Thyroid gland (tissue), 4 donors: ENCODE measurements at regions of chr22 and their contacts with region 1.

Region 1: DNA sequence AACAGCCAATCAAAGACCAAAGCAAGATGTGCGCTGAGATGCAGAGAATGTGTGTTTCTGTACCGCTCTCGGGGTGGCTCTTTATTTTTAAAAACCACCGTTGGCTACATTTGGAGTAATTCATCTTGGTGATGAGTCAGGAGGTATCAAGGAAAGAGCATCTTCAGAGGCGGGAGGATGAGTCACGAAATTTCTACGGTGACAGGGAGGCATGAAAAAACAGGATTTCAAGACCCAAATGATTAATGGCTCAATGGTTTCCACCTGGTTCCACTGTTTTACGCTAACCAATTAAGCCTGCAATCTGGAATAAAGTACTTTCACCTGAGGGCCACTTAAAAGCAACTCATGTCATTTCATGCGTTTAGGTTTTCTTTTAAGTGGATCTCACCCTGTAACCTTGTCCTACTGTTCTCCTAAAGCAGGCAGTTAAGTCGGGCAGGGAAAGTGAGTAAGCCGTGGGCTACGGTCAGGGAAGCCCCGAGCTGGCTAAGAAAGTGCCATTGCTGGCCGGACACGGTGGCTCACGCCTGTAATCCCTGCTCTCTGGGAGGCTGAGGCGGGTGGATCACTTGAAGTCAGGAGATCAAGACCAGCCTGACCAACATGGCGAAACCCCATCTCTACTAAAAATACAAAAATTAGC is 74.6 kb downstream of the CELSR1 start:
- DNase-seq: no peak
- H3K4me3 ChIP-seq: no peak overlapping the region
- H3K27ac ChIP-seq: no peak overlapping the region
- H3K4me1 ChIP-seq: peaks cover 20 to 23% of the 10 kb centered on the region in 2 donors
- H3K27me3 ChIP-seq: no peaks in the 10 kb centered on the region
- CTCF ChIP-seq: no peak
- POLR2A ChIP-seq: no peak

Region 2: GRCh38 chr22:46377566-46378425 is 85.1 kb before region 1 on chr22:
- intact Hi-C with region 1: loop called (anchors 10 kb)
- DNase-seq: peak; percentile 92 to 93
- H3K4me3 ChIP-seq: no peak overlapping the region
- H3K27ac ChIP-seq: peak overlapping the region; percentile 75 to 91 (median 76)
- H3K4me1 ChIP-seq: peaks cover 43 to 46% of the 10 kb centered on the region in 2 donors
- H3K27me3 ChIP-seq: no peaks in the 10 kb centered on the region
- CTCF ChIP-seq: peak in 1 of 6 experiments; percentile 15
- POLR2A ChIP-seq: no peak

Region 3: DNA sequence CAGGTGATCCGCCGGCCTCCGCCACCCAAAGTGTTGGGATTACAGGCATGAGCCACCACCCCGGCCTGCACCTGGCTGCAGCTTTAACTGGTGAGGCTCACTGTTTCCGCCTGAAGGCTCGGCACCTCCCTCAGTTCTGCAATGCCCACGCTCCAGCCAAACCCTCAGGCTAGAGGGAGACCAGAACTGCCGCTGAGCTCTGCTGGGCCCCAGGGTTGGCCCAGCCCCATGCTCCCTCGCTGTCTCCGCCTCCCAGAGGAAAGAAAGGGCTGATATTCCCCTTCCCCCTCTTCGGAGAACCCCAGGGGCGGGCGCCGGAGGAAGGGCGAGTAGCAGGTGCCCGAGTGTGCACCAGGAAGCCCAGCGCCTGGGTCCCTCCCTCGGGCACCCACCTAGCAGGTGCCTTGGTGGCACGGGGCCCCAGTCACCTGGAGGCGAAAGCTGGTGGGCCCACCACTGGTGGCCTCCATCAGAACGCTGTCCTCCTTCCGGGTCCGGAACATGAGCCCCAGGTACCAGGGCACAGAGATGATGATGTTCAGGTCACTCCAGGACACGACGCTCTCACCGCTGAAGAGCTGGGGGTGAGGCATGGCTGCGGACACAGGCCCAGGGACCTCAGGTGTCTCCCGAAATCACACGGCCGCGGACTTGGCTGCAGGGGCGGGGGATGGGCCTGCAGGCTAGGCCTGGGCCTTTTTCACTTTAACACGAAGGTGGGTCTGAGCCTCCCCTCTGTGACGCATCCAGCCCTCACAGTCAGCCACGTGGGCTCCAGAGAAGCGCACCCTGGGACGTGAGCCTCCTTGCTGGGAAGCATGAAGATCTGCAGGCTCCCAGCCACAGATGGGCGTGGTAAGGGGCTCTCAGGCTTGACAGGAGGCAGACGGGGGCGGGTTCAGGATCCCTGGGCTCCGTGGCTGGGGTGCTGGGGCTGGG is 54.0 kb before region 1 on chr22:
- intact Hi-C with region 1: no loop called
- DNase-seq: no peak
- H3K4me3 ChIP-seq: no peak overlapping the region
- H3K27ac ChIP-seq: no peak overlapping the region
- H3K4me1 ChIP-seq: no peaks in the 10 kb centered on the region
- H3K27me3 ChIP-seq: no peaks in the 10 kb centered on the region
- CTCF ChIP-seq: no peak
- POLR2A ChIP-seq: no peak